ENCODE measurements at regions of chr19 and their contacts with region 1.

Region 1: DNA sequence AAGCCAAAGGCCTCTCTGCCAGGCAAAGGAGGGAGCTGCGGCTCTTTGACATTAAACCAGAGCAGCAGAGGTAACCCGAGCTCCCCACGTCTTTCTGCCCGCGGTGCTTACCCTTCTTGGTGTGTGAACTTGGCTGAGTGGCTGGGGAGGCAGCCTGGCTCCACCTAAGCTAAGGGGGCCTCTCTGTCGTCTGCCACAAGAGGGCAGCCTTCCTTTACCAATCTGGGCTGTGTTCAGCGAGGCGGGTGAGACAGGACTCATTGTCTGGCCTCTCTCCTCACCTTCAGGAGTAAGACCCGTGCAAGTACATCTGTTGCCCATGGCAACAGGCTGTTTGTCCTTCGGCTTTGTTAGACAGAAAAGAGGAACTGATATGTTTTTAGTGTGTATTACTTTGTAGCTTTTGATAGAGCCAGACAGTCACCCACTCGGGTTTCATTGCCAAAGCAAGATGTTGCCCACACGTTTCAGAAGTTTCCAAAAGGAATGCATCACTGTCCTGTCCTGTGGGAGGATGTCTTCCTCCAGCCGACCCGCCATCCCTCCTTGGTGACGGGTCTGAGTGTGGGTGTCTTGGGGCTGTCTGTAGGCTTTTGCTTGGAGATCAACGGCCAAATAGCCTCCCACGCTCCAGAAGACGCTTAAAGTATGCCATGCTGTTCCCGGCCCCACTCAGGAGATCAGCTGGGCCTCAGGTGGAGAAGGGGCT is 4.6 kb downstream of the POP4 start:
- DNase-seq: peak; percentile 88
- H3K4me3 Mint-ChIP-seq: no peak overlapping the region
- H3K27ac Mint-ChIP-seq: peak overlapping the region; percentile 9
- H3K4me1 Mint-ChIP-seq: peaks cover 37% of the 10 kb centered on the region
- H3K27me3 Mint-ChIP-seq: no peaks in the 10 kb centered on the region

Region 2: DNA sequence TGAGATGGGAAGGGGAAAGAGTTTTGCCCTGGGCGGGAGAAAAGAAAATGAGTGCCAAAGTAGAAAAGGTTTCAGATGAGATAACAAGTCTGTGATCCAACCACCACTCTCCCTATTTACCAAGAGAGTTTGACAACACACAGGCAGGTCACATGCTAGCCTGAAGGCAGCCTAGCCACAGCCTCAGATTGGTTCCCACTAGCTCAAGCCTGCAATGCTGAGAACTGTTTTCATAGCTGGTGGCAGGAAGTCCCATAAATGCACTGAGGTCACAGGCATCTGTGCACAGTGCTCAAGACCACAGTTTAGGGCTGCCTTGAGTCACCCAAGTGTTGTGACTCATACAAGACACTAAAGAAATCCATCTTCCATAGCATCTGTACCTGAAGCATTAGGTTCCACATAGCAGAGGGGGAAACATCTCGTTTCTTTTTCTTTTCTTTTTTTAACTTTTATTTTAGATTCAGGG is 23.2 kb before region 1 on chr19:
- CTCF ChIA-PET with region 1: interaction called, 4 read pairs
- POLR2A ChIA-PET with region 1: interaction called, 48 read pairs
- DNase-seq: peak; percentile 86
- H3K4me3 Mint-ChIP-seq: no peak overlapping the region
- H3K27ac Mint-ChIP-seq: peak overlapping the region; percentile 75
- H3K4me1 Mint-ChIP-seq: peaks cover 29% of the 10 kb centered on the region
- H3K27me3 Mint-ChIP-seq: peaks cover 25% of the 10 kb centered on the region

Region 3: GRCh38 chr19:29622138-29623070 is 11.7 kb after region 1 on chr19:
- CTCF ChIA-PET with region 1: interaction called, 46 read pairs
- POLR2A ChIA-PET with region 1: interaction called, 131 read pairs
- DNase-seq: peak; percentile 44
- H3K4me3 Mint-ChIP-seq: peak overlapping the region; percentile 86
- H3K27ac Mint-ChIP-seq: peak overlapping the region; percentile 97
- H3K4me1 Mint-ChIP-seq: peaks cover 65% of the 10 kb centered on the region
- H3K27me3 Mint-ChIP-seq: no peaks in the 10 kb centered on the region

Region 4: GRCh38 chr19:29671393-29672160 is 60.9 kb after region 1 on chr19:
- CTCF ChIA-PET with region 1: interaction called, 96 read pairs
- POLR2A ChIA-PET with region 1: interaction called, 69 read pairs
- DNase-seq: peak; percentile 94
- H3K4me3 Mint-ChIP-seq: peak overlapping the region; percentile 65
- H3K27ac Mint-ChIP-seq: peak overlapping the region; percentile 97
- H3K4me1 Mint-ChIP-seq: peaks cover 93% of the 10 kb centered on the region
- H3K27me3 Mint-ChIP-seq: no peaks in the 10 kb centered on the region

Region 5: DNA sequence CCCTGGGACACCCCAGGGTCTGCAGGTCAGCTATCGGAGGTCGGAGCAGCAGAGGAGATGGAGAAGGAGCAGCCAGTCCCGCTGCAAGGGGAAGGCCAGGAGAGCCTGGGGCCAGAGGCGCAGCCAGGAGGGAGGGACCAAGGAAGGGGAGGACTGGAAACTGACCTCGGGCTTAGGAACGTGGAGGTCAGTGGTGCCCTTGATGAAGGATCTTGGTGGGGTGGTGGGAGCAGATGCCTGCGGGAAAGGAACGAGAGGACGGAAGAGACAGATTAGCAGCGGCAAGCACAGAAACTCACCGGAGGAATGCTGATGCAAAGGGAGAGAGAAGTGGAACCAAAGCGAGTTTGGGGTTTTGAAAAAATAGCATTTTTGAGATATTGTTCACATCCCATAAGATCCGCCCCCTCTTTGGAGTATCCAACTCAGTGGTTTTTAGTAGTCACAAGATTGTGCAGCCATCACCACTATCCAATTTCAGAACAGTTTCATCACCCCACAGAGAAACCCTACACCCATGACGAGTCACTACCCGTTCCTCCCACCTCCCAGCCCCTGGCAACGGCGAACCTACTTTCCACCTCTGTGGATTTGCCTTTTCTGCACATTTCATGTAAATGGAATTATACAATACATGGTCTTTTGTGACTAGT is 76.7 kb after region 1 on chr19:
- CTCF ChIA-PET with region 1: interaction called, 97 read pairs
- POLR2A ChIA-PET with region 1: interaction called, 16 read pairs
- DNase-seq: peak; percentile 30
- H3K4me3 Mint-ChIP-seq: no peak overlapping the region
- H3K27ac Mint-ChIP-seq: no peak overlapping the region
- H3K4me1 Mint-ChIP-seq: peaks cover 52% of the 10 kb centered on the region
- H3K27me3 Mint-ChIP-seq: no peaks in the 10 kb centered on the region

Region 6: DNA sequence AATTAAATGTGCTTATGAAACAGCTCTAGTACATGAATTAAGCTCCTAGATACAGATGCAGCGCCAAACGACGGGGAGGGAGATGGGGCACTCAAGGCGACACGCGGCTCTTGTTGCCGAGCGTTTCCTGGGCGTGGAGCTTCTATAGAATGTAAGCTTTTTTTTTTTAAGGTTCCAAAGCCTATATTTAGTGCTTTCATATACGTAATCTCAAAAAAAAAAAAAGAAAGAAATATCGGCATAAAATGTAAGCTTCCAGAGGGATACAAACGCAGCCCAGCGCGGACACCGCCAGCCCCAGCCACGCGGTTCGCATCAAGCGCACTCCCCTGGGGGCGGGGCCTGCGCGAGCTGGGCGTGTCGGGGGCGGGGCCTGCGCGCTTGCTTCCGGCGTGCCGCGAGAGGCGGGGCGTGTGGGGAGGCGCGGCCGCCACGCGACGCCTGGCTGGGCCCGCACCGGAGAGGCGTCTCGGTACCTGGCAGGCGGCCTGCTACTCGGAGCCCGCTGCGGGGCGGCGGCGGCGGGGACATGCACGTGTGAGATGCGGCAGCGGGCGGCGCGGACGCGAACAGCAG is 331.2 kb after region 1 on chr19 and contains the start of gene URI1:
- CTCF ChIA-PET with region 1: interaction called, 4 read pairs
- POLR2A ChIA-PET with region 1: interaction called, 18 read pairs
- DNase-seq: peak; percentile 93
- H3K4me3 Mint-ChIP-seq: peak within 1 kb of the TSS; percentile 93
- H3K27ac Mint-ChIP-seq: peak within 1 kb of the TSS; percentile 86
- H3K4me1 Mint-ChIP-seq: peaks cover 41% of the 10 kb centered on the region
- H3K27me3 Mint-ChIP-seq: peaks cover 1% of the 10 kb centered on the region
- total RNA-seq, gene URI1: 55.5 to 59.0 TPM

Region 7: GRCh38 chr19:30153326-30154210 is 542.9 kb after region 1 on chr19:
- CTCF ChIA-PET with region 1: no interaction called
- POLR2A ChIA-PET with region 1: no interaction called
- DNase-seq: no peak
- H3K4me3 Mint-ChIP-seq: no peak overlapping the region
- H3K27ac Mint-ChIP-seq: no peak overlapping the region
- H3K4me1 Mint-ChIP-seq: no peaks in the 10 kb centered on the region
- H3K27me3 Mint-ChIP-seq: no peaks in the 10 kb centered on the region

Measured in activated CD4-positive, alpha-beta memory T cell treated with anti-CD3 and anti-CD28 coated beads, Interleukin-2, amount 10 ng/mL, durations not matched to agents 7 days and 5 days (primary cell).